ENCODE measurements at regions of chr6 and their contacts with region 1.

Region 1: GRCh38 chr6:6847591-6848274 is 259.2 kb downstream of the LY86 start:
- DNase-seq: no peak
- H3K4me3 ChIP-seq: no peak overlapping the region
- H3K4me3 Mint-ChIP-seq: no peak overlapping the region
- H3K27ac ChIP-seq: no peak overlapping the region
- H3K27ac Mint-ChIP-seq: peak overlapping the region in 2 of 7 donors; percentile 2 to 17
- H3K4me1 ChIP-seq: peaks cover 5 to 11% of the 10 kb centered on the region in 2 donors
- H3K4me1 Mint-ChIP-seq: peaks cover 23% of the 10 kb centered on the region
- H3K27me3 ChIP-seq: no peaks in the 10 kb centered on the region
- H3K27me3 Mint-ChIP-seq: peaks cover 0 to 3% (median 2%) of the 10 kb centered on the region in 3 donors
- CTCF ChIP-seq: no peak

Region 2: DNA sequence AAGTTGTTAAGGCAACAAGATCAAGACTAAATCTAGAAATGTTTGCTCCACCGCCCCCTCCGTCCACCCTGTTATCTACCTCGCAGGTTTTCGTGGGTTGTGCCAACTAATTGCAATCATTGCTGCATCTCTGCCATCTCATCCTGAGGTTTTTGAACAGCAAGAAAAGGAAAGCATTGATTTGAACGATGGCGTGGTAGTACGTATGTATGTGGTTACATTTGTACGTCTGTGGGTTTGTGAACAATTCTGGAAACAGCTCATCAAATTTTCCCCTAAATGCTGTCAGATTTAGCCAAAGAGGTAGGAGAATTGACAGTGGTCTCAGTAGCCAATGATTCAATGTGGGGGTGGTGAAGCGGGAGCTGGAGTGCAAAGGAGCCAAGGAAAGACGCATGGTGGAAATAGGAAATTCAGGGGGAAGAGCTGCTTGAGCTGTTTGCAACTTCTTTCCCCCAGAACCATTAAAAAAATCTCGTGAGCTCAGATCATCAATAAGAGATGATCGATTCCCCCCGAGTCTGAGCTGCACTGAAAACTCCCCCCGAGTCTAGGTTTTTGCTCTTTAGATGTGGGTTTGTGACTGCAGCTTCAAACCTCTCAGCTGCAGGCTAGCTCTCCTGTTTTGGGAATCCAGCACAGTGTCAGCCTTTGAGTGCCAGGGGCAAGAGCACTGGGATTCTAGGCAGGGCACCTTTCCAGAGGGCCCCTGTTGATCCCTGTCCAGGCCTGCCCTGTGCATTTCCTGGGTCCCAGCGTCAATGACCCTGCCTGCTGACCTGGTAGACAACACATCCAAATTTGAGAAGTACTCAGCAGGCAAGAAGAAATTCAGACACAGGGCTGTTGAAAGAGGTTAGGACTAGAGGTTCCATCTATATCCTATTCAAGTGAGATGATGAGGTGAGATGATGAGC is 331.8 kb before region 1 on chr6:
- intact Hi-C with region 1: no loop called
- DNase-seq: no peak
- H3K4me3 ChIP-seq: no peak overlapping the region
- H3K4me3 Mint-ChIP-seq: peak overlapping the region in 1 of 2 donors; percentile 43
- H3K27ac ChIP-seq: no peak overlapping the region
- H3K27ac Mint-ChIP-seq: peak overlapping the region in 1 of 7 donors; percentile 47
- H3K4me1 ChIP-seq: no peaks in the 10 kb centered on the region
- H3K4me1 Mint-ChIP-seq: peaks cover 3% of the 10 kb centered on the region
- H3K27me3 ChIP-seq: peaks cover 10 to 13% of the 10 kb centered on the region in 2 donors
- H3K27me3 Mint-ChIP-seq: peaks cover 20 to 27% (median 27%) of the 10 kb centered on the region in 3 donors
- CTCF ChIP-seq: no peak

Region 3: DNA sequence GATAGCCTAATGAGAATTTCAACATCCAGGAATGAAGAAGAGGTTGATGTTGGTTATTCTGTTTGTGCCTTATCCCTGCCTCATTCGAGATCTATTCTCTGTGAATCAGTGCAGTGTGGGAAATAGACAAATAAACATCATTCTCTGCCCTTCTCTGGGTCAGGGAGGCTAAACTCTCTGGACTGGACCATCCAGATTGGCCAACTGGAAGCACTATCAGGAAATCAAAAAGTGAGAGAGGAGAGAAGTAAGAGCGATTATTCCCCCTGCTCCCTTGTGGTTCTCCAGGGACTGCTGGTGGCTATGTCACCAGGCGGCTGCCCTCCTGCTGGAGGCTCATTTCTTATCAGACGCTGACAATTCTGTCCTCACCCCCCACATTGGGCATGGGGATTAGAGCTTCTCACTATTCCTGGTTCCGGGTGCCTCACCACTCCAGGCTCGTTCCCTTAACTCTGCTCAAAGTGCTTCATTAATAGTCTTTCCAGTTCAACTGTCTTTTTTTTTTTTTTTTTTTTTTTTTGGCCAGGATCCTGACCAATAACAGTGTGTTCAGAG is 58.3 kb after region 1 on chr6:
- intact Hi-C with region 1: loop called in 1 of 2 experiments (anchors 5 kb)
- DNase-seq: no peak
- H3K4me3 ChIP-seq: no peak overlapping the region
- H3K4me3 Mint-ChIP-seq: no peak overlapping the region
- H3K27ac ChIP-seq: no peak overlapping the region
- H3K27ac Mint-ChIP-seq: no peak overlapping the region
- H3K4me1 ChIP-seq: no peaks in the 10 kb centered on the region
- H3K4me1 Mint-ChIP-seq: peaks cover 3% of the 10 kb centered on the region
- H3K27me3 ChIP-seq: no peaks in the 10 kb centered on the region
- H3K27me3 Mint-ChIP-seq: peaks cover 0 to 1% (median 0%) of the 10 kb centered on the region in 3 donors
- CTCF ChIP-seq: no peak

Region 4: GRCh38 chr6:7559658-7560385 is 712.1 kb after region 1 on chr6:
- intact Hi-C with region 1: no loop called
- DNase-seq: no peak
- H3K4me3 ChIP-seq: no peak overlapping the region
- H3K4me3 Mint-ChIP-seq: no peak overlapping the region
- H3K27ac ChIP-seq: no peak overlapping the region
- H3K27ac Mint-ChIP-seq: no peak overlapping the region
- H3K4me1 ChIP-seq: peaks cover 9 to 11% of the 10 kb centered on the region in 2 donors
- H3K4me1 Mint-ChIP-seq: no peaks in the 10 kb centered on the region
- H3K27me3 ChIP-seq: peaks cover 3 to 11% of the 10 kb centered on the region in 2 donors
- H3K27me3 Mint-ChIP-seq: peaks cover 6 to 34% (median 14%) of the 10 kb centered on the region in 3 donors
- CTCF ChIP-seq: no peak